Colonic mucosa (tissue), 4 donors: ENCODE measurements at regions of chr16 and their contacts with region 1.

Region 1: DNA sequence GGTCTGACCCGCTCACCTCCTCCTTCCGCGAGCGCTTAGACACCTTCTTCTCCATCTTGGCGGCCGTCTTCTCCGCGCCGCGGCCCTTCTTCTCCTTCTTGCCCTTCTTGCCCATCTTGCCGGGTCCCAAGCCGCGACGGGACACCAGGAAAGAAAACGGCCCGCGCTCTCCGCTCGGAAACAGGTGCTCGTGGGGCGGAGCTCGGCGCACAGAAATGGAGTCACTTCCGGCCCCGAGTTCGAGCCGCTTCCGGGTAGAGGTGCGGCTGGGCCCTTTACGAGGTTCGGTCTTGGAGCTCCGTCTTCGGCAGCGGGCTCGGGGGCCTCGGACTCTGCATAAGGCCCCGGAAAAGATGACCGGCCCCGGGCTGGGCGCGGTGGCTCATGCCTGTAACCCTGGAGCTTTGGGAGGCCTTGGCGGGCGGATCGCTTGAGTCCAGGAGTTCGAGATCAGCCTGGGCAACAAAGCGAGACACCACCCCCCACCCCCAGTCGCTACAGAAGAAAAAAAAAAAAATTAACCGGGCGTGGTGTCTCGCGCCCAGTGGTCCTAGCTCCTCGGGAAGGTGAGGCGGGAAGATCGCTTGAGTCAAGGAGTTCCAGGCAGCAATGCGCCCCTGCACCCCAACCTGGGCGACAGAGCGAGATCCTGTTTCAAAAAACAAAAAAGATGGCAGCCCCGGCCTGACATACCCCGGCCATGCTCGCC is at the start of gene KLHDC4:
- DNase-seq: peak; percentile 91
- H3K4me3 ChIP-seq: peak within 1 kb of the TSS; percentile 97
- H3K27ac ChIP-seq: peak within 1 kb of the TSS; percentile 70
- H3K4me1 ChIP-seq: peaks cover 6% of the 10 kb centered on the region
- H3K27me3 ChIP-seq: no peaks in the 10 kb centered on the region
- CTCF ChIP-seq: no peak
- total RNA-seq, gene KLHDC4: 21.8 to 79.4 TPM

Region 2: GRCh38 chr16:88569985-88570690 is 804.2 kb after region 1 on chr16 and contains the start of gene ZC3H18:
- intact Hi-C with region 1: loop called (anchors 10 kb)
- DNase-seq: peak; percentile 96
- H3K4me3 ChIP-seq: peak within 1 kb of the TSS; percentile 95
- H3K27ac ChIP-seq: peak within 1 kb of the TSS; percentile 67
- H3K4me1 ChIP-seq: peaks cover 13% of the 10 kb centered on the region
- H3K27me3 ChIP-seq: no peaks in the 10 kb centered on the region
- CTCF ChIP-seq: no peak
- total RNA-seq, gene ZC3H18: 31.9 to 66.3 TPM